ENCODE measurements at regions of chr10 and their contacts with region 1.

Region 1: GRCh38 chr10:72038458-72039001 is 49.8 kb downstream of the SPOCK2 start:
- DNase-seq: no peak
- H3K4me3 ChIP-seq: no peak overlapping the region
- H3K27ac ChIP-seq: no peak overlapping the region
- H3K4me1 ChIP-seq: no peaks in the 10 kb centered on the region
- H3K27me3 ChIP-seq: no peaks in the 10 kb centered on the region
- CTCF ChIP-seq: no peak
- POLR2A ChIP-seq: no peak

Region 2: DNA sequence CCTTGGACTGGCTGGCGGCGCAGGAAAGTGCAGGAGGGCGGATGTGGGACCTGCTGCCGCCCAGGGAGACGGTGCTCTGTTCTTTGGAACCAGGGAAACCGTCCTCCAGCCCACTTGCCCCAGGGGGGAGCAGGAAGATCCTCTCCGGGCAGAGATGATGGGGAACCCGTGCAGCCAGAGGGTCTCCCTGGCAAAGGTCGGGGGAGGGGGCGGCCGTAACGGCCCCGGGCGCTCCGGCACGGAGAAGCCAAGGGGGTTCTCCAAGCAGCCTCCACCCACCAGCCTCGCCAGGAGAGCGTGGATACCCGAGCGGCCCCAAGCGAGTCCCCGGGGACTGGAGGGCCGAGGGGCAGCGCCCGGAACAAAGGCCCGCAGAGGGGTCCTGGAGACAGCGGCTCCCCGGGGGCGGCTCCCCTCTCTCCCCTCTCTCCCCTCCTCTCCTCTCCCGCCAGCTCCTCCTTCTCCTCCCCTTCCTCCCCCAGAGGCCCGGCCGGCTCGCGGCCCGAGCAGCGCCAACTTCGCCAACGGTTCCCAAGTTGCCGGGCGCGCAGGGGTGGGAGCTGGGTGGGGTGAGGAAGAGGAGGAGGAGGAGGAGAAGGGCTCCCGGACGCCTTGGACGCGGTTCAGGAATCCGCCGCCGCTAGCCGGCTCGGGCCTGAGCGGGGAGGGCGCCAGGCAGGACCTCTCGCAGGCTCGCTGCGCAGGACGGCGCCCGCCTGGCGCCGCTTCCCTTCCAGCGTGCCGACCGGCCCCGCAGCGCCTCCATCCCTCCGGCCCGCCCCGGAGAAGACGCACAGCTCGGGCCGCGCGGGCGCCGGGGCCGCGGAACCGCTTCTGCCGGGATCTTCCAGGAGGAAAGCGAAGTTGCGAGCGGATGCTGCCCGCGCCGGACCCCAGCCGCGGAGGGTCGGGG is 74.5 kb before region 1 on chr10 and contains the start of gene CHST3:
- CTCF ChIA-PET with region 1: no interaction called
- POLR2A ChIA-PET with region 1: interaction called, 10 read pairs
- dilution Hi-C with region 1: no loop called
- intact Hi-C with region 1: no loop called
- DNase-seq: peak; percentile 62
- H3K4me3 ChIP-seq: peak within 1 kb of the TSS; percentile 21 to 57 (median 55)
- H3K27ac ChIP-seq: peak within 1 kb of the TSS; percentile 60
- H3K4me1 ChIP-seq: peaks cover 18% of the 10 kb centered on the region
- H3K27me3 ChIP-seq: no peaks in the 10 kb centered on the region
- CTCF ChIP-seq: no peak
- POLR2A ChIP-seq: peak; percentile 18
- total RNA-seq, gene CHST3: 10.0 and 11.5 TPM in 2 replicates